Activated CD4-positive, alpha-beta memory T cell treated with anti-CD3 and anti-CD28 coated beads for 36 hours (primary cell): ENCODE measurements at regions of chr2 and their contacts with region 1.

Region 1: DNA sequence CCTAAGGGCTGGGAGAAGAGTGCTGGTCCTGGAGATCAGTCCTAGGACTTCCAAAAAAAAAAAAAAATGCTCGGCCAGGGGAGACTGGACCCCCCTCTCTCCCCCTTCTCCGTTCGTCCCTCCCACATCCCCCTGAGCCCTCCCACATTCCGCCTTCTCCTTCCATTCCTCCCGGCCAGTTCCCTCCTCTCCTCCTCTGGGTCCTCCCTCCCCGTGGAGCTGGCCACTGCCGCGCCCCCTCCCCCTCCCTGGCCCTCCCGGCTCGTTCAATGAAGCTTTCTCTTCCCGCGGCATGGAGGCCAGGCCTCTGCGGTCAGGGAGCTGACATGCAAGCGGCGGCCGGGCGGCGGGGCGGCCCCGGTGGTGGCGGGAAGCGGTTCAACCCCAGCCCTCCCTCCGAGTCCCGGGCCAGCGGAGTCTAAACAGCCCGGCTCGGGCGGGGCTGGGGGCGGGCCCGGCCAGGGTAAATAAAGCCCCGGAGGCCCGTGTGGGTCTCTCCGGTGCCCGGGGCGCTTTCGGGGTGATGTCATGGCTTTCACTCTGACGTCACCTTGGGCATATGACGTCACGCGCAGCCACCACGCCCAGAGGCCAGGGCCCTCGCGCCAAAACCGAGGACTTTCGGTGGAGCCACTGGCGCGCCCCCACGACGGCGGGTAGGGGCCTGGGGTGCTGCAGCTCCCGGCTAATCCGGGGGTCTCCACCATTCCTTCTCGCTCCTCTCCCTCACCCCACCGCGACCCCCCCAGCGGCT is at the start of gene LOXL3:
- DNase-seq: peak; percentile 87
- H3K4me3 Mint-ChIP-seq: peak within 1 kb of the TSS; percentile 95
- H3K27ac Mint-ChIP-seq: peak within 1 kb of the TSS; percentile 91
- H3K4me1 Mint-ChIP-seq: peaks cover 8% of the 10 kb centered on the region
- H3K27me3 Mint-ChIP-seq: peaks cover 10% of the 10 kb centered on the region
- total RNA-seq, gene LOXL3: 0.90 to 1.1 TPM

Region 2: DNA sequence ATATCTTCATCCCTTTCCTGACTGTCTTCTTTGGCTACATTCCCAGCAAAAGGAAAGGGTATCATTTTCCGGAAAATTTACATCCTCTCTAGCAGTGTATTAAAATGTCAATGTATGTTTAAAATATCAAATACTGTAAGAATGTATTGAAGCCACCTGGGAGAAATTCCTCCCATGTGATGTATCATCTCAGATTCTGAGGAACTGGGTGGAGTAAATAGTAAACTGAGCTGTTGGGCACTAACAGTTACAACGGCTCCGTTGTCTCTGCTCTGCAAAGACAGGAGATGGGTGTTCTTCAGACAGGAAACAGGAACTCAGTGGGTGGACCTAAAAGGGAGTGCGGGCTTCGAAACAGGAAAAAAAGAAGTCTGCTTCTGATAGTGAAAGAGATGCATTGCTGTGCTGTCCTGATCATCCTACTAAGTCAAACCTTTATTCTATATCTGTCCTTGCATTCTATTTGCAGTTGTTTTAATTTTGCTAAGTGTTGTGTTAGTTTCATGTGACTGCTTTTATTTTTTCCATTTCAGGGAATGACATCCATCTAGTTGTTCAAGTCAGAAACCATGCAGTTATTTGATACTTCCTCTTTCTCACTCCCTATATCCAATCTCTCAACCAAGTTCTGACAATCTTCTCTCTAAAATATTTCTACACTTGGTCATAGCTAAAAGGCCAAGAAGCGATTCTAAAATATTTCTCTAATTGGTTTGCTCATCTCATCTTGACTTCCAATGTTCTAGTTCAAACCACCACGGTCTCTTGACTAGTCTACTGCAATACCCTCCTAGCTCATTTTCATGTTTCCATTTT is 19.9 kb after region 1 on chr2:
- CTCF ChIA-PET with region 1: interaction called, 3 read pairs
- POLR2A ChIA-PET with region 1: no interaction called
- intact Hi-C with region 1: loop called (anchors 2 kb)
- DNase-seq: no peak
- H3K4me3 Mint-ChIP-seq: peak overlapping the region; percentile 22
- H3K27ac Mint-ChIP-seq: no peak overlapping the region
- H3K4me1 Mint-ChIP-seq: peaks cover 24% of the 10 kb centered on the region
- H3K27me3 Mint-ChIP-seq: no peaks in the 10 kb centered on the region

Region 3: DNA sequence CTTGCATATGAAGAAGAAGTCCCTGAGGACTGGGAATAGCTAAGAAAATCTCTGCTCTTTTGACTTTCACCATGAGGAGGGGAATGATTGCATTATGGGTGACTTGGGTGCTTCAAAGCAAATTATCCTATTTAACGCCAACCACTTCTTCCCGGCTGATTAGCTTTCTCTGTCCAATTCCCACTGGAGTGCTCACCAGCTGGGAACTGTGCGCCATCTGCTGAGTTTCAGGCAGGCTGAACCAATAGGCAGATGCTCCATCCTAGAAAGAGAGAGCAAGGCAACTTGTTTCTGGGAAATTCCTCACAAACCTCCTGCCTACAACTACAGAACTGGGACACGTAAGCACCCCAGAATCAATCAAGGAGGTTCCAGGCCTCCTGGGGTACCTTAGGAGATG is 453.8 kb after region 1 on chr2:
- CTCF ChIA-PET with region 1: no interaction called
- POLR2A ChIA-PET with region 1: no interaction called
- intact Hi-C with region 1: no loop called
- DNase-seq: no peak
- H3K4me3 Mint-ChIP-seq: no peak overlapping the region
- H3K27ac Mint-ChIP-seq: no peak overlapping the region
- H3K4me1 Mint-ChIP-seq: no peaks in the 10 kb centered on the region
- H3K27me3 Mint-ChIP-seq: no peaks in the 10 kb centered on the region